ENCODE measurements at regions of chr17 and their contacts with region 1.

Region 1: GRCh38 chr17:3048767-3049471 is 14.5 kb downstream of the OR1D5 start:
- DNase-seq: peak; percentile 96 to 98 (median 97)
- ATAC-seq: peak; percentile 99 to 100 (median 100)
- H3K4me3 ChIP-seq: peak overlapping the region; percentile 39 to 87 (median 70)
- H3K27ac ChIP-seq: peak overlapping the region in 11 of 12 donors; percentile 52 to 85 (median 73)
- H3K4me1 ChIP-seq: peaks cover 0 to 14% (median 4%) of the 10 kb centered on the region in 12 donors
- H3K27me3 ChIP-seq: no peaks in the 10 kb centered on the region
- CTCF ChIP-seq: peak; percentile 72 to 94 (median 84)
- POLR2A ChIP-seq: peak in 1 of 2 donors; percentile 72

Region 2: GRCh38 chr17:3647769-3648555 is 599.0 kb after region 1 on chr17:
- intact Hi-C with region 1: loop called in 6 of 10 experiments (anchors 5 to 10 kb)
- DNase-seq: peak in 2 of 5 donors; percentile 70 to 72
- ATAC-seq: peak; percentile 63 to 80 (median 77)
- H3K4me3 ChIP-seq: no peak overlapping the region
- H3K27ac ChIP-seq: no peak overlapping the region
- H3K4me1 ChIP-seq: peaks cover 0 to 9% (median 0%) of the 10 kb centered on the region in 12 donors
- H3K27me3 ChIP-seq: no peaks in the 10 kb centered on the region
- CTCF ChIP-seq: peak; percentile 24 to 62 (median 39)
- POLR2A ChIP-seq: no peak

Region 3: GRCh38 chr17:3659541-3660111 is 610.7 kb after region 1 on chr17:
- intact Hi-C with region 1: loop called in 2 of 10 experiments (anchors 10 kb)
- DNase-seq: peak; percentile 62 to 86 (median 80)
- ATAC-seq: peak; percentile 35 to 73 (median 62)
- H3K4me3 ChIP-seq: no peak overlapping the region
- H3K27ac ChIP-seq: peak overlapping the region; percentile 69 to 92 (median 83)
- H3K4me1 ChIP-seq: peaks cover 5 to 43% (median 20%) of the 10 kb centered on the region in 12 donors
- H3K27me3 ChIP-seq: no peaks in the 10 kb centered on the region
- CTCF ChIP-seq: peak in 1 of 12 donors; percentile 9
- POLR2A ChIP-seq: no peak

Region 4: GRCh38 chr17:3668279-3669085 is 619.6 kb after region 1 on chr17 and contains the starts of genes EMC6 and TAX1BP3:
- intact Hi-C with region 1: loop called in 1 of 10 experiments (anchors 10 kb)
- DNase-seq: peak; percentile 98 to 100 (median 99)
- ATAC-seq: peak; percentile 86 to 93 (median 90)
- H3K4me3 ChIP-seq: peak within 1 kb of the TSS; percentile 61 to 100 (median 88)
- H3K27ac ChIP-seq: peak within 1 kb of the TSS; percentile 91 to 100 (median 99)
- H3K4me1 ChIP-seq: peaks cover 4 to 47% (median 36%) of the 10 kb centered on the region in 12 donors
- H3K27me3 ChIP-seq: no peaks in the 10 kb centered on the region
- CTCF ChIP-seq: peak in 2 of 12 donors; percentile 2 to 3
- POLR2A ChIP-seq: peak; percentile 98 to 100
- total RNA-seq, gene EMC6: 24.2 to 78.2 (median 51.9) TPM
- total RNA-seq, gene TAX1BP3: 122 to 291 (median 177) TPM

Measured in heart left ventricle (tissue), 16 donors.